ENCODE measurements at regions of chr20 and their contacts with region 1.

Region 1: DNA sequence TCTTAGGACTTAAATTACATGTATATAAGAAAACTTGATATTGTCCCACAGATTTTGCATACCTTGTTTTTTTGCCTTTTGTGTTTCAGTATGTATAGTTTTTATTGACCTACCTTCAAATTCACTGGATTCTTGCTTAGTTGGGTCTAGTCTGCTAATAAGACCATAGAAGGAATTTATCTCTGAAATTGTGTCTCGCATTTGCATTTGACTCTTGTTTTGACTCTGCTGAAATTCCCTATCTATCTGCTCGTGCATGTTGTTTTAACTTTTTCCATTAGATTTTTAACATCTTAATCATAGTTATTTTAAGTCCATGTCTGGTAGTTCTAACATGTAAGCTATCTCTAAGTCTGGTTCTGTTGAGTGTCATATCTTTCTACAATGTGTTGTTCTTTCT is 163.9 kb downstream of the SCP2D1 start:
- DNase-seq: no peak
- ATAC-seq: no peak

Region 2: GRCh38 chr20:18314786-18315406 is 662.5 kb before region 1 on chr20:
- intact Hi-C with region 1: no loop called
- DNase-seq: no peak
- ATAC-seq: no peak

Region 3: GRCh38 chr20:18995455-18995854 is 18.0 kb after region 1 on chr20:
- intact Hi-C with region 1: loop called (anchors 1 kb)
- DNase-seq: no peak
- ATAC-seq: no peak